ENCODE measurements at regions of chr11 and their contacts with region 1.

Region 1: DNA sequence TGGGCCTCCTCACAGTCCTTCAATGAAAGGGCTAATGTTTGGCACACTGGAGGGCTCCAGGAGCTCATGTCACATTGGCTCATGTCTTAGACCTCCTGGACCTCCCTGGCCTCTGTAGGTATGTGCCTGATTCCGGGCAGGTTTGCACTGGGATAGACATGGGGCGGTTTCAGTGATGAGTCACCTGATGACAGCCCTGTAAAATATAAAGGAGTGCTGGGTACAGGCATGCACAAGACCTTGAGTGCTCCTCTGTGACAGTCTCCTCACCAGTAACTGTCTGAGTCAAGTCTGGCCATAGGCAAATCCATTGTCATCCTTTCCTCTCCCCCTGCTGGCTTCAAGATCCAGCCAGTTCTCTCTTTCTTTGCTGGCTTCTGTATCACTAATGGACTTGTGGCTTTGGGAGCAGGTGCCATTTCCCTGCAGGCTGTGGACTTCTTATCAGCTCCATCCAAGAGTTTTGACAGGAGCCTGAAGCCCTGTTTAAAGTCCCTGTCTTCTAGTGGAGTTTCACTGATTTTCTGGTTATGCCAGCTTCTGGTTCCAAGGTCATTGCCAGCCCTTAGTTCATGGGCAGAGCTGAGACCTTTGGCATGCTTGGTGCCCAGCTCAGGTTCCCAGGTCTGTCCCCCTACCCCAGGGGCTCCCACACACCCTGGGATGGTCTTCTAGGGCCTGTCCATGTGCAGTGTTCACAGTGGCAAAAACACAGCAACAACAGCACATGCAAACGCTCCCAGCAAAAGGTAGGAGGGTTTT is 22.7 kb upstream of the P2RY2 start:
- DNase-seq: peak; percentile 67
- ATAC-seq: peak; percentile 83
- H3K4me3 ChIP-seq: peak overlapping the region in 1 of 2 experiments; percentile 39; a peak in 1 of 4 replicates
- H3K27ac ChIP-seq: no peak overlapping the region
- H3K4me1 ChIP-seq: peaks cover 34 to 71% of the 10 kb centered on the region in 2 experiments
- H3K27me3 ChIP-seq: no peaks in the 10 kb centered on the region
- CTCF ChIP-seq: no peak
- POLR2A ChIP-seq: no peak
- RAD21 ChIP-seq: no peak

Region 2: DNA sequence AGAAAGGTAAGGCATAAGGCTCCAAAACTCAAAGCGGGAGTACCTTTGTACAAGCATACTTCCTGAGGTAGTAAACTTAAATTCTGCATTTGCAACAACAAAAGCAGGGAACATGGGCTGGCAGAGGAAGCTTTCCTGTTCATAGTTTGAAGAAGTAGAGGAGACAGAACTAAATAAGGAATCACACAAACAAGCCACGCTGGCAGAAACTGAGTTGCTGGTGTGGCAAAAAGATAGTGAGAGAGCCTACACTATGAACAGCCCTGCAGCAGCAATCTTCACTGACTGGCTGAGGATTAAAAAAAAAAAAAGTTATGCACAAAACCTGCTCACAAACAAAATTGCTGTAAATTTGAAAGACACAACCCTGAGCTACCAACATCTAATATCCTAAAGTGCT is 99.8 kb before region 1 on chr11:
- CTCF ChIA-PET with region 1: no interaction called
- POLR2A ChIA-PET with region 1: no interaction called
- RAD21 ChIA-PET with region 1: no interaction called
- intact Hi-C with region 1: no loop called
- DNase-seq: no peak
- ATAC-seq: no peak
- H3K4me3 ChIP-seq: no peak overlapping the region
- H3K27ac ChIP-seq: no peak overlapping the region
- H3K4me1 ChIP-seq: no peaks in the 10 kb centered on the region
- H3K27me3 ChIP-seq: no peaks in the 10 kb centered on the region
- CTCF ChIP-seq: no peak
- POLR2A ChIP-seq: no peak
- RAD21 ChIP-seq: no peak

Region 3: DNA sequence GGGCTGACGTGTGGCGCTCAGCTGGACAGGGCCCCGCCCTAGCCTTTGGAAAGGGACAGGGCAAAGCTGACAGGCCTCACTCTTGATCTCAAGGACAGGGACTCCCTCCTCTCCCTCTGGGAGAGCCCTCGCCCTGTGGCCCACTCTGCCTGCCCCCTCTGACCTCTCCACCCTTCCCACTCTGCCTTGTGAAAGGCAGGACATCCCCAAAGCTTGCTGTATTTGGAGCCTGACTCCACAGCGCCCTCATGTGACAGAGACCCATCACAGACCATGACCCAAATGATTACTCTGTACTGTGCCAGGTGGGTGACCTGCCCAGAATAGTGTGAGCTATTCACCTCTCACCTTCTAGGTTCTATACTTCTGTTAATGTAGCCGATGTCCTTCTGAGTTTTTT is 41.4 kb after region 1 on chr11:
- CTCF ChIA-PET with region 1: interaction called, 13 read pairs
- POLR2A ChIA-PET with region 1: no interaction called
- RAD21 ChIA-PET with region 1: no interaction called
- intact Hi-C with region 1: no loop called
- DNase-seq: peak; percentile 39
- ATAC-seq: peak; percentile 88
- H3K4me3 ChIP-seq: no peak overlapping the region
- H3K27ac ChIP-seq: no peak overlapping the region
- H3K4me1 ChIP-seq: peaks cover 0 to 14% of the 10 kb centered on the region in 2 experiments; a peak in 1 of 4 replicates
- H3K27me3 ChIP-seq: no peaks in the 10 kb centered on the region
- CTCF ChIP-seq: peak; percentile 86 to 90 (median 86)
- POLR2A ChIP-seq: no peak
- RAD21 ChIP-seq: peak; percentile 92